Right ventricle myocardium inferior (tissue), 1 donor: ENCODE measurements at regions of chr9 and their contacts with region 1.

Region 1: DNA sequence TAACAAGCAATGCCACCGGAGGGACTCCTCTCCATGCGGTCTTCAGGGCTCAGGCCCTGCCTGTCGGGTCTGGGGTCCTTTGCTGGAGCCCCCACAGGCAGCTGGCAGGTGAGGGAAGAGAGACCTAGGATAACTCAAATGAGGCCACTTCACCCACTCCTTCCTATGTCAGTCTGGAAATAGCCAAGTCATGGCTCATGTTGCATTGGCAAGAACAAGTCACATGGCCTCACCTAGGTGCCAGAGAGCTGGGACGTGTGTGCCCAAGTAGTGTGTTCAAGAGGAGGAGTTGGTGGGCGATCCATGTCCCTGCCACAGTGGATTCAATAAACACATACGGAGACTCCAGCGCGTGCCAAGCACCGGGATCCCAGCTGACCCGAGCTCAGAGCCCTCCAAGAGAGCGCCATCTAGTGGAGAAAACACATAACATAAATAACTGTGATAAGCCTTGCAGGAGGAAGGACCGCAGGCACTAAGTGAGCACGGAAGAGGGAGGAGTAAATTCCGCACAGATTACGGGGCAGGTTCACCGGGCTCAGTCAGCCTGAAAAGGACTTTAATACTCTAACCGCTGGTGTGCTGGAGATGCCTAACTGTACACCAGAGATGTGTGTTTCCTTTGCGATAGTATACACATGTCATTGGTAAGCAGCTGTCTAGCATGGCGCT is 580.8 kb downstream of the CCDC171 start:
- DNase-seq: no peak
- ATAC-seq: no peak

Region 2: DNA sequence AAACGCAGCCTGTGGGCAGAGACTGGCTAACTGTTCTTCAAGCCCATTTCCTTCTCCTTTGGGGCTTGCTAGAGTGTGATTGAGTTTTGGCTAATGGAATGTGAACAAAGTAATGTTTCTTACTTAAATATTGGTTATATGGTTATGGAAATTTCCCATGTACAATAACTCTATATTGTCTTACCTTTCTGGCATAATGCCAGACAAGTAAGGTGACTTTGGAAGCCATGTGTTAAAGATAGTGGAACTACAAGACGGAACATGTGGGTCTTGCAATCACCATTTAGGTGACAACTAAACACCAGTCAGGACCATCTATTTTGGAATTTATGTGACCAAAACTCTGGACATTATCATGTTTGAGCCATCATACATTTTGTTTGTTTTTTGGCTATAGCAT is 320.6 kb before region 1 on chr9:
- intact Hi-C with region 1: no loop called
- DNase-seq: no peak
- ATAC-seq: no peak

Region 3: DNA sequence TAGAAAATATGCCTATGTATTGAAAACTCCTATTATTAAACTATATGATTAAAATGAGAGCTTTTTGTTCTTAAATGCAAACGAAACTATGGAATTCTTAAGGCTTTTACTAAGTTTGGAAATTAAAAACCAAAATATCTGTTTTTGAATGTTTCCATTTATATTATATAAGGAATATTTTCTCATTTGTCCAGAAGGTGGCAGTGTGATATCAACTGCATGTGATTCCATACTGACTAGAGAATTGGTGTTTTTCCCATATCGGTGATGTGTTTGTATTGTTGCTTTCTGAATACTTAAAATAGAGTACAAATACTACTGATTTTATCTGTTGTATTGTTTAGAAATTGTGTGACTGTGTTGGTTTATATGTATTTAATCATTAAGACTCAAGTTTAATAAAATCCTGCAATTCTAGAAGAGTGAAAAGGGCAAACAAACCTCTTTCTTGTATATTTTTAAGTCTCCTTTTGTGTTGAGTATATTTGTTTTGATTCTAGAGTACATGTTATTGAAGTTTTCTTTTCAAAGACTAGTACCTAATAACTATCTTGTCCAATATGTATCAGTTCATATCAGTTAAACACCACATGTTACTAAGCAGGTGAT is 260.0 kb before region 1 on chr9:
- intact Hi-C with region 1: loop called (anchors 10 kb)
- DNase-seq: no peak
- ATAC-seq: no peak

Region 4: GRCh38 chr9:15999422-16000339 is 134.0 kb before region 1 on chr9:
- intact Hi-C with region 1: loop called (anchors 10 kb)
- DNase-seq: no peak
- ATAC-seq: peak; percentile 91

Region 5: DNA sequence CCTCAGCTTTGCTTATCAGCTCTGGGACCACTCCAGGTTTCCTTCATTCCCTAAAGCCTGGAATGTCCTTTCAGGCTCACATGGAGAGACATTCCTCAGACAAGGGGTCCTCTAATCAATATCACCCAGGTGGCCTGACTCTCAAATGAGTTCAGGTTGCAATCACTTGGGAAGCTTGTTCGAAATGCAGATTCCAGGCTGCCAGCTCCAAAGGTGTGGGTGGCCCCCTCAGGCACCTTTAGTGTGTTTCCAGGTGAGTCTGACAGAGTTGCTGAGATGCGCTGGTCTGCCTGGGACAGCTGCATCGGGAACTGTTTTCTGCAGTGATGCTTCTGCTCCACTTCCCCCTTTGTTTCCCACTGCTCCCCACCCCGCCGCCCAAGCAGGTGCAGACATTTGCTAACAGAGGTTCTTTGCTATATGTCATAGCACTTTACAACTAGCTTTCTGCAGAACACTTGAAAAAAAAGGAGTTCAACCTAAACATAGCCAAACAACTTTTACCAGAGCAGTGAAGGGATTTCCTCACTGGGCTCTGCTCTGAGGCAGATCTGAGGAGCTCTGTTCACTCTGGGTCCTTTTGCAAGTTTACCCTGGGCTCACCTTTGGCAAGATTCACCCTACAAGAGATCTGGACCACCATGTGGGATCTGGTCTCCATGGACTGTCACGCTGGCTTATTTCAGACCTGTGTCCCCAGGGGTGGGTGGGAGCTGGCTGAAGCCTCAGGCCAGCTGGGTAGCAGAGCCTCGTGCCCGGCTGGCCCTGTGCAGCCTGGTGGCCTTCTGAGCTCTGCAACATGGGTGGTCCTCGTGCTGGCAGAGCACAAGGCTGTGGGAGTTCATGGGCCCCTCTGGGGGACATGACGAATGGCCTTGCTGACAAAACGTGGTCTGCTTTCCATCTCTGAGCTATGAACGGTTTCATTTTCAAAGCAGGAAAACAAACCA is 41.3 kb before region 1 on chr9:
- intact Hi-C with region 1: no loop called
- DNase-seq: no peak
- ATAC-seq: peak; percentile 80